ENCODE measurements at regions of chr1 and their contacts with region 1.

Region 1: GRCh38 chr1:228004331-228004855 is 2.4 kb upstream of the WNT3A start:
- DNase-seq: peak; percentile 43 to 59
- H3K4me3 ChIP-seq: no peak overlapping the region
- H3K27ac ChIP-seq: no peak overlapping the region
- H3K4me1 ChIP-seq: no peaks in the 10 kb centered on the region
- H3K27me3 ChIP-seq: peaks cover 13% of the 10 kb centered on the region
- CTCF ChIP-seq: peak; percentile 80

Region 2: GRCh38 chr1:227487606-227488005 is 516.8 kb before region 1 on chr1:
- CTCF ChIA-PET with region 1: no interaction called
- POLR2A ChIA-PET with region 1: no interaction called
- intact Hi-C with region 1: no loop called
- DNase-seq: no peak
- H3K4me3 ChIP-seq: no peak overlapping the region
- H3K27ac ChIP-seq: no peak overlapping the region
- H3K4me1 ChIP-seq: no peaks in the 10 kb centered on the region
- H3K27me3 ChIP-seq: no peaks in the 10 kb centered on the region
- CTCF ChIP-seq: no peak

Region 3: GRCh38 chr1:227508431-227508830 is 496.0 kb before region 1 on chr1:
- CTCF ChIA-PET with region 1: no interaction called
- POLR2A ChIA-PET with region 1: no interaction called
- intact Hi-C with region 1: no loop called
- DNase-seq: no peak
- H3K4me3 ChIP-seq: no peak overlapping the region
- H3K27ac ChIP-seq: no peak overlapping the region
- H3K4me1 ChIP-seq: no peaks in the 10 kb centered on the region
- H3K27me3 ChIP-seq: 0 out of 2 replicates have a peak, but pooled peaks cover 4% of the 10 kb centered on the region
- CTCF ChIP-seq: no peak

Region 4: DNA sequence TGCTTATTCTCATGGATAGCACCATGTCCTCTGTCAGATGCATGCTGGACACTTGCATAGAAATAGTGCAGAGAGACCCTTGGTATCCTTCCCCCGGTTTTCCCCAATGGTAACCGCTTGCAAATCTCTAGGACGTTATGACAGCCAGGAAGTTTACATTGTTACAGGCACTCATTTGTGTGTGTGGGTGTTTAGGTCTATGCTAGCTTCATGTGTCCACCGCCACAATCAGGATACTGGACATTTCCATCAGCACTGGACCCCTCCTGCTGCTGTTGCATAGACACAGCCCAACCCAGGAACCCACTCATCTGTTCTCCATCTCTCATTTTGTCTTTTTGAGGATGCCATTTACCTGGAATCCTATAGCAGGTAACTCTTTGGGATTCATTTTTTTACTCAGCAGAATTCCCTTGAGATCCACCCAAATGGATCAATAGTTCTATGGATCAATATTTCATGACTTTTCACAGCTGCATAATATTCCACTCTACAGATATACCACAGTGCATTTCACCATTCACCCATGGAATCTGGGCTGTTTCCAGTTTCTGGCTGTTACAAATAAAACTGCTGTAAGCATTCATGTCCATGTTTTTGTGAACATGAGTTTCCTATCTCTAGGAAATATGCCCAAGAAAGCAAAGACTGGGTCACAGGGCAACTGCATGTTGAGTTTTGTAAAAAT is 50.1 kb before region 1 on chr1:
- CTCF ChIA-PET with region 1: no interaction called
- POLR2A ChIA-PET with region 1: no interaction called
- intact Hi-C with region 1: no loop called
- DNase-seq: no peak
- H3K4me3 ChIP-seq: no peak overlapping the region
- H3K27ac ChIP-seq: no peak overlapping the region
- H3K4me1 ChIP-seq: no peaks in the 10 kb centered on the region
- H3K27me3 ChIP-seq: peaks cover 22% of the 10 kb centered on the region; the same call in 1 of the 2 replicates
- CTCF ChIP-seq: peak; percentile 14; the same call in 1 of the 2 replicates

Region 5: DNA sequence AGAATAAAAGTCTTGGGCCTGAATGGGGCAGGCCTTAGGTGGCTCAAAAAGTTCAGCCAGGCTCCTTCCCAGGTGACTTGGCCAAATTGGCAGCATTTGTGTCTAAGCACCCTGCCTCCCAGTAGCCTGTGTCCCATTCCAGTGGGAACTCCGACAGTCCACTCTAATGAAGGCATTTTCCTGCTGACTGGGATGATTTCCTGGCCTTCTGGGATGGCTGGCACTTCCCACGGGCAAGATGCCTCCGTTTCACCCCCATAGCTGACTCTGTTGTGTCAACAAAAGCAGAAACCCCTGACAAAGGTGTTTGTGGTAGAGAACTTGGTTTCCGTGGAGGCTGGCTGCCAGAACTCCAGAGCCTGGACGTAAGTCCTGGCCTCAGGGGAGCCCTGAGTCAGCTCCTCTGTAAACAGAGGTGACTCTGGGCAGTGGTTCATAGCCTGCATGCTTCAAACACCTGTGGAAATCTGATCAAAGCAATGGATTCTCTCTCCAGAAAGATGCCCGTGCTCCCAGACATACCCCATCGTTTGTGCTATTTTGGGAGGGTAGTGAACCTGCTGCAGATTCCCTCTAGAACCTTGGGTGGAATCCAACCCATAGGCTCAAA is 39.0 kb after region 1 on chr1:
- CTCF ChIA-PET with region 1: interaction called, 6 read pairs
- POLR2A ChIA-PET with region 1: interaction called, 7 read pairs
- intact Hi-C with region 1: loop called (anchors 2 kb)
- DNase-seq: peak; percentile 90 to 96
- H3K4me3 ChIP-seq: 0 out of 2 replicates have a peak overlapping the region, but pooled peaks have one; percentile 13
- H3K27ac ChIP-seq: peak overlapping the region; percentile 68
- H3K4me1 ChIP-seq: peaks cover 45% of the 10 kb centered on the region
- H3K27me3 ChIP-seq: no peaks in the 10 kb centered on the region
- CTCF ChIP-seq: no peak

Region 6: GRCh38 chr1:228059634-228060457 is 55.5 kb after region 1 on chr1:
- CTCF ChIA-PET with region 1: interaction called, 14 read pairs
- POLR2A ChIA-PET with region 1: no interaction called
- intact Hi-C with region 1: loop called (anchors 1 kb)
- DNase-seq: peak; percentile 80 to 99
- H3K4me3 ChIP-seq: peak overlapping the region; percentile 96
- H3K27ac ChIP-seq: no peak overlapping the region
- H3K4me1 ChIP-seq: peaks cover 15% of the 10 kb centered on the region
- H3K27me3 ChIP-seq: no peaks in the 10 kb centered on the region
- CTCF ChIP-seq: no peak

Region 7: GRCh38 chr1:228082135-228082891 is 77.9 kb after region 1 on chr1 and contains the start of gene ARF1:
- CTCF ChIA-PET with region 1: interaction called, 10 read pairs
- POLR2A ChIA-PET with region 1: no interaction called
- intact Hi-C with region 1: loop called (anchors 5 kb)
- DNase-seq: peak; percentile 70 to 95
- H3K4me3 ChIP-seq: peak within 1 kb of the TSS; percentile 100
- H3K27ac ChIP-seq: peak within 1 kb of the TSS; percentile 78
- H3K4me1 ChIP-seq: peaks cover 38% of the 10 kb centered on the region
- H3K27me3 ChIP-seq: no peaks in the 10 kb centered on the region
- CTCF ChIP-seq: no peak
- total RNA-seq, gene ARF1: 431 and 595 TPM in 2 replicates

Region 8: GRCh38 chr1:228102791-228103620 is 98.6 kb after region 1 on chr1 and contains the start of gene C1orf35:
- CTCF ChIA-PET with region 1: no interaction called
- POLR2A ChIA-PET with region 1: no interaction called
- intact Hi-C with region 1: loop called (anchors 2 kb)
- DNase-seq: peak; percentile 79 to 95
- H3K4me3 ChIP-seq: peak within 1 kb of the TSS; percentile 85
- H3K27ac ChIP-seq: no peak within 1 kb of the TSS
- H3K4me1 ChIP-seq: peaks cover 9% of the 10 kb centered on the region
- H3K27me3 ChIP-seq: no peaks in the 10 kb centered on the region
- CTCF ChIP-seq: no peak
- total RNA-seq, gene C1orf35: 26.4 and 37.6 TPM in 2 replicates

Region 9: GRCh38 chr1:228515200-228515834 is 510.9 kb after region 1 on chr1:
- CTCF ChIA-PET with region 1: no interaction called
- POLR2A ChIA-PET with region 1: interaction called, 4 read pairs
- intact Hi-C with region 1: loop called (anchors 1 kb)
- DNase-seq: peak in 1 of 2 experiments; percentile 46
- H3K4me3 ChIP-seq: no peak overlapping the region
- H3K27ac ChIP-seq: no peak overlapping the region
- H3K4me1 ChIP-seq: no peaks in the 10 kb centered on the region
- H3K27me3 ChIP-seq: peaks cover 27% of the 10 kb centered on the region
- CTCF ChIP-seq: peak; percentile 87